AG04449 (cell line): ENCODE measurements at regions of chr2 and their contacts with region 1.

Region 1: DNA sequence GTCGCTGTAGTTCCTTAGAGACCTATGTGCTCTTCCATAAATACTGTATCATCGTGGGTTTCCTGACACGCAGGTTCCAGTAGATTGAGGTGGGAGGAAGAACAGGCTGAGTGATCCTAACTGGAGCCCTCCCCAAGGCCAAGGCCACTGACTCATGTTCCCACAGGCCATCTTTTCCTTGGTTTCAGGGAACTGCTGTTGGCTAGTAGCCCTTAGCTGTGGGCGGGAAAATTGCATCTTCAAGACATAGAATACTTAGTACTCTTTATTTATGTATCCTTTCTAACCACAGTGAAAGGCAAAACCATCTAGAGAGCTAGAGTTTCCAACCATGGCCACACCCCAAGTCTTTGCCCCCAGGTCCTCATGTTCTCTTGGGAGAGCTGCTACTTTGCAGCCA is 55.9 kb downstream of the COPS8 start:
- DNase-seq: peak; percentile 59
- H3K4me3 ChIP-seq: no peak overlapping the region
- CTCF ChIP-seq: no peak

Region 2: DNA sequence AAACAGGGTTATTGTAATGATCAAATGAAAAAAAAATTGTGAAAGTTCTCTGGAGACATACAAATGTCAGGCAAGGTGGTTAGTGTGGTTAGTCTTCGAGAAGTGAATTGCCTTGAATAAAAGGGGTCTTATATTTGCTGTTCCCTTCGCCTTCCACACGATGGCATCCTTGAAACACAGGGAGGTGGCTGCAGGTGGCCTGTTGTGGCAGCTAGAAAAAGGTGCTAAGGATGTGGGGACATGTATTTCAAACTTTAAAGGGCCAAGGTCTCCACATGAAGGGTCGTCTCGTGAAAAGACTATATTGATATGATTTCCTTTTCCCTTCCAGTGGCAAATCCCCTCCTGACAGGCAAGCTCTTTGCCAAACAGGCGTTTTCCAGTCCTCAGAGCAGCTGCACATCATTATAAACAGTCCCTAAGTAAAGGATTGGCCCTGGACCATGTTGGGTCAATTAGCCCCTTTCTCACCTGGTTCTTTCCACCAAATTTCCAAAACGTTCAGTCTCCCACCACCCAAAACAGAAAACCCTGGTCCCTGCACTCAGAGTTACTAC is 12.6 kb after region 1 on chr2:
- CTCF ChIA-PET with region 1: interaction called, 22 read pairs
- POLR2A ChIA-PET with region 1: no interaction called
- DNase-seq: no peak
- H3K4me3 ChIP-seq: no peak overlapping the region
- CTCF ChIP-seq: peak; percentile 71